Motor neuron (in vitro differentiated cells): ENCODE measurements at regions of chr6 and their contacts with region 1.

Region 1: GRCh38 chr6:11496152-11497060 is 41.1 kb upstream of the TMEM170B start:
- ATAC-seq: peak; percentile 68 to 94 (median 86)
- H3K4me3 ChIP-seq: no peak overlapping the region
- H3K27ac ChIP-seq: no peak overlapping the region
- H3K4me1 ChIP-seq: peaks cover 4% of the 10 kb centered on the region in 2 donors

Region 2: DNA sequence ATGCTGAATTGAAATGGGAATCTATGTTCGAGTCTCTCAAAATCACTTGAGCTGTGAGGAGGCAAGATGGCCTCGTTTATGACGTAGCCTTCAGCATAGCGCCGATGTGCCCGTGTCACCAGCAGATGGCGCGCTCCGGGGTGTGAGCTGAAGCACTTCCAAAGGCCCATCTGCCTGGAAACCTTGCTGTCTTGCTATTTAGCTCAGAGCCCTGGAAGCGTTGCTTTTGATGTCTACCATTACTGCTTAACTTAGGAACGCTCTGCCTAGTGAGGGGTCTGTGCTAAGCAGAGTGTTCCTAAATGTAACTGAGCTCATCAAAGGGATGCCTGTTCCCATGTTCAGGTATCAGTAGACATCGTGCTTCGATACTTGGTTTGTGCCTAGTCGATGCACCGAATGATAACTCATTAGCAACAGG is 541.8 kb before region 1 on chr6:
- in situ Hi-C with region 1: loop called in 1 of 9 experiments (anchors 25 kb)
- ATAC-seq: peak in 7 of 8 experiments; percentile 26 to 94 (median 82)
- H3K4me3 ChIP-seq: no peak overlapping the region
- H3K27ac ChIP-seq: no peak overlapping the region
- H3K4me1 ChIP-seq: no peaks in the 10 kb centered on the region

Region 3: DNA sequence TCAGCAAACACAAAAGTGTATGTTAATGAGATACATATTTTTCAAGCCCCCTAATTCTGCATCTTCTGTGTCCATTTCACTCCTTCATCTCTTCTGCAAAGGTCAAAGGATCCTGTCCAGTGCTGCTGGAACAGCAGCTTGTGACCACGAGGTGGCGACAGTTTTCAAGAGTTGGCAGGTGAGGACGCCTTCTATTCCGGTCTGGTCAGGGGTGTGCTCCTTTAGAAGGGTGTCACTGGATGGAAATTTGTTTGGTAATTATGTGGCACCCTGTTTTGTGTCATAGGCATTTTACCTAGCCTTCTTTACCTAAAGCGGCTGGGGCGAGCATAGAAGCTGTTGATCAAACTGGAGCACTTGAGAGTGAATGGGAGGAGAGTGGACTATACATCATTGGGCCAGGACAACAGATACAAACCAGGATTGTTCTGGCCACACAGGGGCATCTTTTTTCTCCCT is 352.0 kb before region 1 on chr6:
- in situ Hi-C with region 1: loop called in 4 of 9 experiments (anchors 10 to 25 kb)
- ATAC-seq: peak; percentile 81 to 97 (median 88)
- H3K4me3 ChIP-seq: no peak overlapping the region
- H3K27ac ChIP-seq: no peak overlapping the region
- H3K4me1 ChIP-seq: peaks cover 0 to 4% of the 10 kb centered on the region in 2 donors

Region 4: GRCh38 chr6:11155589-11155988 is 340.8 kb before region 1 on chr6:
- in situ Hi-C with region 1: loop called in 5 of 9 experiments (anchors 10 to 25 kb)
- ATAC-seq: no peak
- H3K4me3 ChIP-seq: no peak overlapping the region
- H3K27ac ChIP-seq: no peak overlapping the region
- H3K4me1 ChIP-seq: no peaks in the 10 kb centered on the region

Region 5: GRCh38 chr6:11172501-11173332 is 323.7 kb before region 1 on chr6:
- in situ Hi-C with region 1: loop called in 2 of 9 experiments (anchors 25 kb)
- ATAC-seq: peak in 7 of 8 experiments; percentile 41 to 84 (median 57)
- H3K4me3 ChIP-seq: no peak overlapping the region
- H3K27ac ChIP-seq: no peak overlapping the region
- H3K4me1 ChIP-seq: peaks cover 10 to 16% of the 10 kb centered on the region in 2 donors

Region 6: DNA sequence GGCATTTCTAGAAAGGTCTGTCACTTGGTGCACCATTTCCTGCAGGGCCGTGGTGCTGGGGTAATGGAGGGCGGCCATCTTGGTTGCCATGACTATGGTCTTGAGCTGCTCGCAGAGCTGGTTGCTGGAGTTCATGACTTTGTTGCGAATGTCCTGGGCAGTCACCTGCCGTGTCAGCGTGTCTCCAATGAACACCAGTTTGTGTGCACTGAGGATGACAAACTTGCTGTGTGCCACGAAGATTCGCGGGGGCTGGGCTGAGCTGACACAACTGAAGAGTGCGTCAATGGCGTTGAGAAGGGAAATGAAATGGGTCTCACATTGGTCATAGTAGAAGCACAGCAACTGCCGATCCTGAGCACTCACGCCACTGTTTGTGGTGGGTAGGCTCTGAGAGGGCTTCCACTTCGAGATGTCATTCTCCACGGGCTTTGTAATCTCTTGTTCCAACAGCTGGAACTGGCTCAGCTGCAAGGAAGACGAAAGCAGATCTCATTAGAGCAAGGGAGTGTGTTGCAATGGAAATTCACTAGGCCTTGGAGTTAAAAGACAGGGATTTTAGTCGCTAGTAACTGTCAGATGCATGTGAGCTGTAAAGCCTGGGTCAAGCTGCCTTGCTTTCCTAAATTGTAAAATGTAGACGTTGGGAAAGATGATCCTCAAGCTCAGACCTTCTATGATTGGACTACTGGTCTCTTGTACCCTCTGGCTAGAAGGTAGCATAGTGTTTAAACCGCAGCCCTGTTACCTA is 311.0 kb before region 1 on chr6:
- in situ Hi-C with region 1: no loop called
- ATAC-seq: no peak
- H3K4me3 ChIP-seq: no peak overlapping the region
- H3K27ac ChIP-seq: no peak overlapping the region
- H3K4me1 ChIP-seq: no peaks in the 10 kb centered on the region

Region 7: DNA sequence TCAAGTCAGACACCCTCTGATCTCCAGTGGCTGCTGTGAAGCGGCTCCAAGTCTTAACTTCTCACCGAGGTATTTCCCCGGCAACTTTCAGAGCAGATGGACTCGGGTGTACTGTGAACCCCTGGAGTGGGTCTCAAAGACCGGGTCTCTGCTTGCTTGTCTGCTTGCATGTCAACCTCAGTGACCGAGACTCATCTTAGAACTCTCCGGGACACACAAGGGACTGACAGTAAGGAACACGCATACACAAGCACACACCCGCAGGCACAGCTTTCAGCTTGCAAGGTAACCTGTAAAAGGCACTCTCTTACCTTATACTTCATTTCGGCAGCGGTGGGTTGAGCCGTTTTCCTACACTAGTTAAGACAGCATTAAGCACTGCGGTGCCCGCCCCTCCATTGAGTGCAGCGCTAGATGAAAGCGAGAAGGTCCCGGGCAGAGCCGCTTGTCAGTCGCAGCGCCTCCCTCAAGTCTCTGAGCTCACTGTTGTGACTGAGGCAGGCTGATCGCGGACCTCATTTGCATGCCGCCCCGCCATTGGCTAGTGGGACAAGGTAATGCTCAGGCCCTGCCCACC is 264.1 kb before region 1 on chr6 and contains the start of gene NEDD9:
- in situ Hi-C with region 1: loop called in 1 of 9 experiments (anchors 25 kb)
- ATAC-seq: peak; percentile 92 to 98 (median 94)
- H3K4me3 ChIP-seq: peak within 1 kb of the TSS; percentile 40 to 65 (median 51)
- H3K27ac ChIP-seq: peak within 1 kb of the TSS in 1 of 2 donors; percentile 59
- H3K4me1 ChIP-seq: peaks cover 34 to 35% of the 10 kb centered on the region in 2 donors
- total RNA-seq, gene NEDD9: 1.4 to 48.0 (median 6.5) TPM

Region 8: DNA sequence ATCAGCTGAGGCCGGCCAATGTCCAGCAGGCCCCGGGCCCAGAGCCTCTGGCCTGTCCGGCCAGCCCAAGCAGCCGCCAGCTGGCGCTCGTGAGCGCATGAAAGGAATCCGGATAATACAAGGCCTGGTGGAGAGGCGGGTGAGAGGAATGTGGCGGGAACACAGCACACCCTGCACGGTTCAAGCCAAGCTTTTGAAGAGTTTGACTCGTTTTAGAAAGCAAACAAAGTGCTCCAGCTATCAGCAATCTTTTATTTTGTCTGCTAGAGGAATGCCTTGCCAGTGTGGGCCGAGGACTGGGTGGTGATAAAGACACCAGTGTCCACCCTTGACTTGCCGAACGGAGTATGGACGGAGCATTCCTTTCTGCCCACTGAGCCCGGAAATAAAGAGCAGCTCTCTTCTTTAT is 254.6 kb before region 1 on chr6:
- in situ Hi-C with region 1: loop called in 2 of 9 experiments (anchors 10 to 25 kb)
- ATAC-seq: peak in 7 of 8 experiments; percentile 30 to 94 (median 68)
- H3K4me3 ChIP-seq: no peak overlapping the region
- H3K27ac ChIP-seq: no peak overlapping the region
- H3K4me1 ChIP-seq: peaks cover 2 to 3% of the 10 kb centered on the region in 2 donors

Region 9: GRCh38 chr6:12348530-12349511 is 852.4 kb after region 1 on chr6:
- in situ Hi-C with region 1: no loop called
- ATAC-seq: peak in 3 of 8 experiments; percentile 45 to 72 (median 45)
- H3K4me3 ChIP-seq: no peak overlapping the region
- H3K27ac ChIP-seq: no peak overlapping the region
- H3K4me1 ChIP-seq: peaks cover 1 to 2% of the 10 kb centered on the region in 2 donors